ENCODE measurements at regions of chr22 and their contacts with region 1.

Region 1: GRCh38 chr22:20156611-20157429 is 6.0 kb upstream of the CCDC188 start:
- DNase-seq: peak; percentile 89
- ATAC-seq: peak; percentile 90

Region 2: GRCh38 chr22:20268279-20269012 is 111.6 kb after region 1 on chr22 and contains the start of gene RTN4R:
- intact Hi-C with region 1: loop called (anchors 5 kb)
- DNase-seq: peak; percentile 78
- ATAC-seq: peak; percentile 93
- total RNA-seq, gene RTN4R: 0.75 TPM

Region 3: DNA sequence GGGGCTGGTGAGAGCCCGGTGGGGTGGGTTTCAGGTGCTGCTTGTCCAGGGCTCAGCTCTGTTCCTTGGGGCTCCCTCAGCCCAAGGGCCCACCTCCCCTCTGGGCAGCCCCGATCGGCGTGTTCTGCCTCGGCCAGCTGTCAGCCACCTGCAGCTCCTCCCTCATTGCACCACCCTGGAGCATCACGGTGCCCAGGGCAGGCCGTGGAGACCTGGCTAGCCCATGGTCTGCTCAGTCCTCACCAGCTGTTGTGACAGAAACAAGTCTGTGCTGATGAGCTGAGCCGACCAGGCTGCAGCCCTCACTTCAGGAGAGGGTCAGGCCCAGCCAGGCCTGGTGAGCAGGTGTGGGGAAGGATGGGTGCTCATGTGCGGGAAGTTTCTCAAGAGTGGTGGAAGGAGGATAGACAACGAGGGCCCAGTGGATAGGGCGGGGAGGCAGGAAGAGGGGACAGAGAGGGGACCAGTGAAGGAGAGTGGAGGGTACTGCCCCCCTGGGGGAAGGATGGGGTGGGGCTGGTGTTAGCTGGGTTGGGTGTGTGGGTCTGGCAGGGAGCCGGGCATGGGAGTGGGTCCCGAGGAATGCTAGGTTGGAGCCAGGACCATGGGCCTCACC is 127.8 kb after region 1 on chr22:
- intact Hi-C with region 1: loop called (anchors 1 kb)
- DNase-seq: no peak
- ATAC-seq: no peak

Measured in Right ventricle myocardium superior (tissue), 1 donor.